Activated CD4-positive, alpha-beta T cell treated with anti-CD3 and anti-CD28 coated beads for 36 hours (primary cell): ENCODE measurements at regions of chr15 and their contacts with region 1.

Region 1: DNA sequence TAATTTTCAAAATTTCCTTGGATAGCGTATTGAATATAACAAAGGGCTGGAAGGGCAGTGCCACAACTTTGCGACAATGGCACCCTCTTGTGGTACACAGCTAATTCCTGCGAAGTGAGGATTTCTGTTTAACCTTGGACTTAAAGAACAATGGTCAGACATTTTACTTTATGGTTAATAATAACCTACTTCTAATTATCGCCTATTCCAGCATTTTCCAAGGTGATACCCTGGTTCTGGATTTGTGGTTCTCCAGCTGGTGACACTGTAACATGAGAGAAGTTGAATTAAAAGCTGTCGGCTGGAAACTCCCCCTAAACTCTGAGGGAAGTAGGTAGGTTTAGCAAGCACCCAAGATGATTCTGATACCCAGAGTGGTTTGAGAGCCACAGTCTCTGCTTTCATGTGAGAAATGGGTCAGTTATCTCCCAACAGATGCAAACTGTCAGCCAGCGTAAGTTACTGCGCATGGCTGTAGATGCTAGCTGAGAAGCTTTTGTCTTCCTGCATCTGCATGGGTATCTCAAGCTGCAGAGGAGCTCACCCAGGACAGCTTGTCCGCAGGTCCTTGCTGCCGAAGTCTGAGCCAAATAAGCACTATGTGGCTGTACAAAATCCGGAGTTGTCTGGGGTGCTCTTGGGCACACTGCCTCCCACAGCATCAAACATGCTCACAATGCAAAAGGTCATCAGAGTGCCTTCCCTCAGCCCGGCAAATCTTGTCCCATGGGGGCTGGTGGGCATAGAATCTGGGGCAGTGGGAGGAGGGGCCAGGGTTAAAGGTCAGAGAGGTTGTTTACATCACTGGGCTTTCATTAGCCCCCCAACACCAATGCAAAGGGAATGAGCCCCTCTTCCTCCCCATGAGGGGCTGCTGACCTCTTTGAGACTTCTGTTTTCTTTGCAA is 6.6 kb upstream of the CHSY1 start:
- DNase-seq: peak; percentile 71
- ATAC-seq: no peak
- H3K4me3 Mint-ChIP-seq: no peak overlapping the region
- H3K27ac Mint-ChIP-seq: no peak overlapping the region
- H3K4me1 Mint-ChIP-seq: peaks cover 19% of the 10 kb centered on the region
- H3K27me3 Mint-ChIP-seq: peaks cover 5% of the 10 kb centered on the region

Region 2: DNA sequence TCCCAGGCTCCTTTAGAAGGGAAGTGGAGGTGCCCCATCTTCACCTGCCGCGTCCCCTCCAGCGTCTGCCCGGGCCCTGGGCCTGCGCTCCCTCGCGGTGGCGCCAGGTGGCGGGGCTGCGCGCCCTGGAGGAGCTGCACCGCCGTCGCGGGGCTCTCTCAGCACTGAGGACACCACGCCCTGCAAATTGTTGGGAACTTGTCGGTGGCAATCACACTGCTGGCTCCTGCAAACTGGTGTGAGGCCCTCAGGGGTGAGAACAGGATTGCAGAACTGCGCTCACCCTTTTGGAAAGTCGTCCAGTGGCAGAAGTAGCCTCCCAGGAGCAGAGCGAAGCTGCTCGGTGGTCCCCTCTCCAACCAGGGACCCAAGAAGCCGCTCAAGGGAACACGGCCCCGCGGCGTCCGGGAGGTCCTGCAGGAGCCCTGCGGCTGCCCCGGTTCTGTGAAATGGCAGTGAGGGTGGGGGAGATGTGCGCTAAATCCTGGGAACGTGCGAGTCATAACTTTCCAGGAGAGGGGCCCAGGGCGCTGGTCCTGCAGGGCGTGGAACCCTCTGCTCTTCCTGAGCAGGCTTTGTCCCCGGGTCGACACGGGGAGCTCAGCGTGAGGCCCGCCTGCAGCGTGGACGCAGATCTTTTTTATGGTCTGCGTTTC is 340.3 kb before region 1 on chr15:
- CTCF ChIA-PET with region 1: interaction called, 4 read pairs
- POLR2A ChIA-PET with region 1: no interaction called
- intact Hi-C with region 1: loop called (anchors 5 to 10 kb)
- DNase-seq: peak; percentile 84
- ATAC-seq: peak; percentile 94
- H3K4me3 Mint-ChIP-seq: peak overlapping the region; percentile 66
- H3K27ac Mint-ChIP-seq: peak overlapping the region; percentile 0
- H3K4me1 Mint-ChIP-seq: peaks cover 15% of the 10 kb centered on the region
- H3K27me3 Mint-ChIP-seq: peaks cover 55% of the 10 kb centered on the region

Region 3: GRCh38 chr15:101014921-101015841 is 243.3 kb before region 1 on chr15:
- CTCF ChIA-PET with region 1: interaction called, 51 read pairs
- POLR2A ChIA-PET with region 1: no interaction called
- intact Hi-C with region 1: loop called (anchors 1 kb)
- DNase-seq: peak; percentile 84
- ATAC-seq: peak; percentile 58
- H3K4me3 Mint-ChIP-seq: no peak overlapping the region
- H3K27ac Mint-ChIP-seq: no peak overlapping the region
- H3K4me1 Mint-ChIP-seq: no peaks in the 10 kb centered on the region
- H3K27me3 Mint-ChIP-seq: peaks cover 2% of the 10 kb centered on the region

Region 4: DNA sequence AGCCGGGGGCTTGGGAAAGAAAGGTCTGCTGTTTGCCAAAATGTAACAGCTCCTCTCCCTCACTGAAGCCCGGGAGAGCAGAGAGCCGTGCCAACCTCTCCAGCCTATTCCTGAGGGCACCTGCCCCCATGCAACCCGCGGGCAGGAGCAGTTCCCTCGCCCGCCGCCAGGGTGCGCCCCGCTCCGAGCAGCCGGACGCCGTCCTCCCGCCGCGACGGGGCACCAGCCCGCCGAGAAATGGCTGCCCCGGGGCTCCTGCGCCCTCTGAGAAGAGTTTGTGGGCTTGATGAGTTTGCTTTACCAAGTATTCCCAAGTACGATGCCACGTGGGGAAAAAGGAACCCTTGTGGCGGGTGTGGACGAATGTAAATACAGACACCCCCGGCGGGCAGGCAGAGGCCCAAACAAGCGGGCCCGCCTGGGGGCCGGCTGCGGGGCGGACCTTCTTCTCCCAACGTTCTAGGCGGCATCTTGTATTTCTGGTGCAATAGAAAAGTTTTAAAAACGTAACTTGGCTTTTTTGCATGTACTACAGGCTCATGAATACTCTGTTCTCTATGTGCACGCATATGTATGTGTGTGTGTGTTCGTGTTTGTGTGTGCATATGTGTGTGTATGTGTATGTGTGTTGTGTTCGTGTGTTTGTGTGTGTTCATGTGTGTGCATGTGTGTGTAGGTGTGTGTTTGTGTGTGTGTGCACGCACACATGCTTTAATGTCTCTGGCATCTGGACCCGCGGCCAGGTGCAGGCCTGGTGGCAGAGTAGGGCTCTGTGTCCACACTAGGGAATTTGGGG is 169.5 kb before region 1 on chr15:
- CTCF ChIA-PET with region 1: interaction called, 31 read pairs
- POLR2A ChIA-PET with region 1: no interaction called
- intact Hi-C with region 1: loop called (anchors 1 kb)
- DNase-seq: peak; percentile 89
- ATAC-seq: peak; percentile 96
- H3K4me3 Mint-ChIP-seq: no peak overlapping the region
- H3K27ac Mint-ChIP-seq: no peak overlapping the region
- H3K4me1 Mint-ChIP-seq: no peaks in the 10 kb centered on the region
- H3K27me3 Mint-ChIP-seq: no peaks in the 10 kb centered on the region

Region 5: DNA sequence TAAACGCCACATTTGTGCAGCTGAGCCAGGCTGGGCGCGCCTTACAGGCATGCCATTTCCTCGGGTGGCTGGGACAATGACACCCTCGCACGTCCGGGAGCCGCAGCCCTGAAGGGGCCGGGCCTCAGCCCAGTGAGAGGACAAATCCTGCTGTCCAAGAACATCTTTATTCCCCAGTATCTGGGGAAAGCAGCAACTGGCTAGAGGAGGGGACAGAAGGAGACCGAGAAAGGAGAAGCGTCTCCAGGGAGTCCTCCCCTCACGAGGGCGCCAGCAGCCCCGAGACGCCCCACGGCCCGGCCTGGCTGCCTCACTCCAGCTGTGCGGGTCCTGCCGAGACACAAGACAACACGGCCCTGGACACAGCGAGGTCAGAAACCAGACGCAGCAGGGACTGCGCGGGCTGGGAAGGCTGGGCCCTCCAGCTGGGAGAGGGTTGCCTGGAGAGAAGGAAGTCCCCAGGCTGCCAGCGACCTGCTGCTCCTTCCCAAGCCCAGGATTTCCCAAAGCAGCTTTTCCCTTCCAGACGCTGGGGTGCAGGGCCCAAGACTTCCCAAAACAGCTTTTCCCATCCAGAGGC is 136.9 kb before region 1 on chr15:
- CTCF ChIA-PET with region 1: interaction called, 5 read pairs
- POLR2A ChIA-PET with region 1: no interaction called
- intact Hi-C with region 1: loop called in 1 of 2 experiments (anchors 1 kb)
- DNase-seq: peak; percentile 77
- ATAC-seq: peak; percentile 79
- H3K4me3 Mint-ChIP-seq: peak overlapping the region; percentile 58
- H3K27ac Mint-ChIP-seq: peak overlapping the region; percentile 84
- H3K4me1 Mint-ChIP-seq: peaks cover 37% of the 10 kb centered on the region
- H3K27me3 Mint-ChIP-seq: no peaks in the 10 kb centered on the region

Region 6: DNA sequence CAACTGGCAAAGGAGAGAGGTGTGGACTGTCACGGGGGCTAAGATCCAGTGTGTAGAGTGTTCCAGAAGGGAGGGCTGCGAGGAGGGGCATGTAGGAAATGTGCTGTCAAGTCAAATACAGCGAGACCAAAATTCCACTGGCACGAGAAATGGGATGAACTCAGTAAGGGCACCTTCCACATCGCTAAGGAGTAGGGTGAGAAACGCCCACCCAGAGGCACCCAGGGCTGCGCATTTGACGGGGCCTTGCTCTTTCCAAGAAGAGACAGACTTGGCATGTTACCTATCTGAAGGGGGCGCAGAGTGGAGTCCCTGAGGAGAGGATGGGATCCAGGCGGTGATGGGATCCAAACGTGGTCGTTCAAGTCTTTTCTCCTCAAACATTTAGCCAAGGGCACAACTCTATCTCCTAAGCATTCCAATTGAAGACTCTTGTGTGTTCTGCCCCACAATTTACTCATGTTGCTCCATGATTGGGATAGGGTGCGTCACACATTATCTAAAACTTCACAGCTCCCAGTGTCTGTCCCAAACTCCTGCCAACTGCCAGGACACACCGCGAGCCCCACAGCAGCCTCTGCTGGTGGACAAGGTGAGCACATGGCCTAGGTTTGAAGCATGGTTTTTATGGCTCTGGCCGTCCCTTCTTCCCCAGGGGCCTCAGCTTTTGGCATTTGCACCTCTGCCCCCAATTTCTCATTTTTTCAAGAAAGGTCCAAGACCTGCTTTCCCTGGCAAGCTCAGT is 11.2 kb after region 1 on chr15:
- CTCF ChIA-PET with region 1: interaction called, 20 read pairs
- POLR2A ChIA-PET with region 1: no interaction called
- intact Hi-C with region 1: no loop called
- DNase-seq: no peak
- ATAC-seq: peak; percentile 54
- H3K4me3 Mint-ChIP-seq: no peak overlapping the region
- H3K27ac Mint-ChIP-seq: no peak overlapping the region
- H3K4me1 Mint-ChIP-seq: peaks cover 2% of the 10 kb centered on the region
- H3K27me3 Mint-ChIP-seq: no peaks in the 10 kb centered on the region